ENCODE measurements at regions of chr10 and their contacts with region 1.

Region 1: GRCh38 chr10:102114861-102115618 is 5.1 kb downstream of the LDB1 start:
- DNase-seq: peak; percentile 85
- H3K4me3 ChIP-seq: peak overlapping the region; percentile 28 to 92 (median 62)
- H3K27ac ChIP-seq: no peak overlapping the region
- H3K4me1 ChIP-seq: peaks cover 55% of the 10 kb centered on the region
- H3K27me3 ChIP-seq: no peaks in the 10 kb centered on the region
- CTCF ChIP-seq: no peak

Region 2: DNA sequence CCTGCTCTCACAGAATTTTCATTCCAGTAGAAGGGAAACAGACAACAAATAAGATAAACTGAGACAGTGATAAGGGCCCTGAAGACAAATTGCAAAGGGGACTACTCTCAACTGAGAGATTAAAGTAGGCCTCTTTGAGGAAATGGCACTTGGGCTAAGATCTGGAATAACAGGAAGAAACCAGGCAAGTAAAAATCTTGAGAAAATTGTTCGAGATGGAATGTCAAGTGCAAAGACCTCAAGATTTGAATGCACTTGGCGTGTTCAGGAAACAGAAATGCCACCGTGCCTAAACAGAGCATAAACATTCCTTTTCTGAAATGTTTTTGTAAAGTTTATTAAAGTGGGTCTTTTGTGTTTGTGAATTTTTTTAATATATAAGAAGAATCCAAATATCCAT is 69.7 kb before region 1 on chr10:
- CTCF ChIA-PET with region 1: no interaction called
- dilution Hi-C with region 1: no loop called
- in situ Hi-C with region 1: no loop called
- intact Hi-C with region 1: no loop called
- DNase-seq: no peak
- H3K4me3 ChIP-seq: no peak overlapping the region
- H3K27ac ChIP-seq: no peak overlapping the region
- H3K4me1 ChIP-seq: no peaks in the 10 kb centered on the region
- H3K27me3 ChIP-seq: no peaks in the 10 kb centered on the region
- CTCF ChIP-seq: no peak

Region 3: GRCh38 chr10:102064868-102065560 is 50.0 kb before region 1 on chr10 and contains the start of gene HPS6:
- CTCF ChIA-PET with region 1: no interaction called
- dilution Hi-C with region 1: no loop called
- in situ Hi-C with region 1: no loop called
- intact Hi-C with region 1: loop called (anchors 5 kb)
- DNase-seq: peak; percentile 93
- H3K4me3 ChIP-seq: peak within 1 kb of the TSS; percentile 55 to 83 (median 83)
- H3K27ac ChIP-seq: peak within 1 kb of the TSS; percentile 47
- H3K4me1 ChIP-seq: peaks cover 19% of the 10 kb centered on the region
- H3K27me3 ChIP-seq: no peaks in the 10 kb centered on the region
- CTCF ChIP-seq: peak in 1 of 2 donors; percentile 14
- total RNA-seq, gene HPS6: 26.8 to 39.3 TPM

Region 4: DNA sequence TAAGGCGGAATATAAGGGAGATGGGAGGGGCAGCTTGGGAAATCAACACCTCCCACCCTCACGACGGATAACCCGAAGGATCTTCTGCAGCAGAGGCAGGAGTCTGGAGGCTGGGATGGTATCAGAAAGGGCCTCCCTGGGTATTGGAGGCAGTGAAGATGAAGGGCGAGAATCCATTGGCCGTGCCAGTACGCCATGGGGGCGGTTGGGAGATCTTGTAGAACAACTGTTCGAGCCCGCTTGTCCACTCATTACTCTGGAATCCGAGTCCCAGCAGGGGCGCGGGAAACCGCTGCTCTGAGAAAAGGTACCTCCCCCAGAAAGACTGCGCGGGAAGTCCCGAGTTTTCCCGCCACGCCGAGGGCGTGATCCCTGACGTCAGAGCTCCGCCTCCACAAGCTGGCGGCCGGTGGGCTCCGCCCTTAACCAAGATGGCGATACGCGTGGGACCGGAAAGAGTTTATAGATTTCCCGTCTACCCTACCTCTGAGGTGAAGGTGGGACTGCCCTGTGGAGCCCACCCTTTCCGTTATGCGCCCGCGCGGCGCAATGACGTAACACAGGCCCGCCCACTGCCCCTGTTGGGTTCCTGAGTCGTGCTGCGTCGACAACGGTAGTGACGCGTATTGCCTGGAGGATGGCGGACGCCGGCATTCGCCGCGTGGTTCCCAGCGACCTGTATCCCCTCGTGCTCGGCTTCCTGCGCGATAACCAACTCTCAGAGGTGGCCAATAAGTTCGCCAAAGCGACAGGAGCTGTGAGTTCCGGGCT is 36.9 kb after region 1 on chr10 and contains the start of gene NOLC1:
- CTCF ChIA-PET with region 1: no interaction called
- dilution Hi-C with region 1: no loop called
- in situ Hi-C with region 1: no loop called
- intact Hi-C with region 1: loop called (anchors 5 kb)
- DNase-seq: peak; percentile 99
- H3K4me3 ChIP-seq: peak within 1 kb of the TSS; percentile 82 to 96 (median 89)
- H3K27ac ChIP-seq: peak within 1 kb of the TSS; percentile 95
- H3K4me1 ChIP-seq: peaks cover 13% of the 10 kb centered on the region
- H3K27me3 ChIP-seq: no peaks in the 10 kb centered on the region
- CTCF ChIP-seq: no peak
- total RNA-seq, gene NOLC1: 51.2 to 116 TPM

Region 5: DNA sequence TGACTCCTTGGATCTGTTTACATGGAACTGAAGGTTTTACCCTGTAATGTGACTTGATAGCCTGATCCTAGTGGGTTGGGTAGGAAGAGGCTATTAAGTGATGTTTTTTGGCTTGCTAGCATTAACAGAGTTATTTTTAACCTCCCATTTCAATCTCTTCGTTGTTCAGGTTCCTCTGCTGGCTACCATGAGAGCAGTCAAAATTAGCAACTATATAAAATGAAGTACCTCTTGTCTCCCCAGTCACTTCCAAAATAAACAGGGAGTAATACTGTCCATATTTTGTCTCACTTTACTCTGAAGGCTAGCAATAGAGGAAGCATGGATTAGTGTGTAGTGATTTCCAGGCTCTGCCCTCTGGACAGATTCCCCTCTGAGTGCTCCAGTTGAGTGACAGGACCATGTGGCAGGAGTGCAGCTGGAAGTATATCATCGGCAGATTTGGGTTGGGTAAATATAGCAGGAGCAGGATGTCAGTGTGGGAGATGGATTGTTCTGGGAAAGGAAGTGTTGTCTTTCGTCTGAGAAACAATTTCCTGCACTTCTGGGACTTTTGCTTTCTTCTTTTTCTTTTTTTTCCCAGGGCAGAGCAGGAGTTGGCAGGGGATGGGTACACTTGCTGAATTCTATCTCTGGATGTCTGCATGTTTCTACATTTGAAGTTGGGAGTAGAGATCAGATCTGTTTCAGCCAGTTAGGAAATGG is 165.5 kb after region 1 on chr10:
- CTCF ChIA-PET with region 1: no interaction called
- dilution Hi-C with region 1: no loop called
- in situ Hi-C with region 1: no loop called
- intact Hi-C with region 1: no loop called
- DNase-seq: no peak
- H3K4me3 ChIP-seq: peak overlapping the region in 1 of 3 experiments; percentile 18
- H3K27ac ChIP-seq: peak overlapping the region; percentile 6
- H3K4me1 ChIP-seq: peaks cover 43% of the 10 kb centered on the region
- H3K27me3 ChIP-seq: no peaks in the 10 kb centered on the region
- CTCF ChIP-seq: no peak

Measured in mammary epithelial cell (primary cell).